CD8-positive, alpha-beta T cell (primary cell): ENCODE measurements at regions of chr20 and their contacts with region 1.

Region 1: DNA sequence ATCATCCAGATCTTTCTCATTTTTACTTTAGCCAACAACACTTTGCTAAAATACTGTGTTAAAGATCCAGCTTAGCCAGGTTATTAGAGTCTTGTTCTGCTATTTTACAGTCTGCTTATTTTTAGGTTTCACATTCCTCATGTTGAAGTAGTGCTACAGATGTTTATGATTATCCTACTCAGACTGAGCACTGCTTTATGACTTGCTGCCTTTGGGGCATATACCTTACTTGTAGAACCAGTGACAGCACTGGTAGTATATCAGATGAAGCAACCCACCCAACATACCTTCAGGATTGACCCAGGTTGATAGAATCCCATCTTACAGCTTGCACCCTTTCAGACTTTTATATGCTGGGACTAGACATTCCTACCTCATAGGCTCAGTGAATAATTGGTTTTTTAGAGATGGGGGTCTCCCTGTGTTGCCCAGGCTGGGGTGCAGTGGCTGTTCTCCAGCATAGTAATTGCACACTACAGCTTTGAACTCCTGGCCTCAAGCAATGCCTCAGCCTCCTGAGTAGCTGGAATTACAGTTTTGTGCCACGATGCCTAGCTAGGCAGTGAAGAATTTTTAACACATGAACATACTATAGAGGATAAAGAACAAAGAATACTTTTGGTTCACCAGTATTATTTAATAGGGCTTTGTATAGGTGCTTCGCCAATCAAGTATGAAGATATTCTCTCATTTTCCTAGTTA is 63.8 kb upstream of the DYNLRB1 start:
- DNase-seq: no peak
- ATAC-seq: no peak
- H3K4me3 ChIP-seq: no peak overlapping the region
- H3K4me3 Mint-ChIP-seq: no peak overlapping the region
- H3K27ac ChIP-seq: no peak overlapping the region
- H3K27ac Mint-ChIP-seq: no peak overlapping the region
- H3K4me1 ChIP-seq: no peaks in the 10 kb centered on the region
- H3K4me1 Mint-ChIP-seq: peaks cover 11% of the 10 kb centered on the region
- H3K27me3 ChIP-seq: no peaks in the 10 kb centered on the region
- H3K27me3 Mint-ChIP-seq: no peaks in the 10 kb centered on the region
- CTCF ChIP-seq: no peak

Region 2: GRCh38 chr20:34791289-34792020 is 339.0 kb after region 1 on chr20:
- CTCF ChIA-PET with region 1: no interaction called
- POLR2A ChIA-PET with region 1: interaction called, 10 read pairs
- intact Hi-C with region 1: no loop called
- DNase-seq: no peak
- ATAC-seq: no peak
- H3K4me3 ChIP-seq: no peak overlapping the region
- H3K4me3 Mint-ChIP-seq: no peak overlapping the region
- H3K27ac ChIP-seq: no peak overlapping the region
- H3K27ac Mint-ChIP-seq: no peak overlapping the region
- H3K4me1 ChIP-seq: no peaks in the 10 kb centered on the region
- H3K4me1 Mint-ChIP-seq: peaks cover 16% of the 10 kb centered on the region
- H3K27me3 ChIP-seq: no peaks in the 10 kb centered on the region
- H3K27me3 Mint-ChIP-seq: no peaks in the 10 kb centered on the region
- CTCF ChIP-seq: no peak